ENCODE measurements at regions of chr4 and their contacts with region 1.

Region 1: GRCh38 chr4:186587416-186588018 is 32.1 kb upstream of the MTNR1A start:
- DNase-seq: peak; percentile 62
- H3K4me3 ChIP-seq: no peak overlapping the region; a peak in 1 of 4 replicates
- H3K27ac ChIP-seq: no peak overlapping the region
- H3K4me1 ChIP-seq: no peaks in the 10 kb centered on the region
- H3K27me3 ChIP-seq: no peaks in the 10 kb centered on the region; the same call in 1 of the 2 replicates
- CTCF ChIP-seq: peak; percentile 89
- EP300 ChIP-seq: no peak
- RAD21 ChIP-seq: peak; percentile 75

Region 2: DNA sequence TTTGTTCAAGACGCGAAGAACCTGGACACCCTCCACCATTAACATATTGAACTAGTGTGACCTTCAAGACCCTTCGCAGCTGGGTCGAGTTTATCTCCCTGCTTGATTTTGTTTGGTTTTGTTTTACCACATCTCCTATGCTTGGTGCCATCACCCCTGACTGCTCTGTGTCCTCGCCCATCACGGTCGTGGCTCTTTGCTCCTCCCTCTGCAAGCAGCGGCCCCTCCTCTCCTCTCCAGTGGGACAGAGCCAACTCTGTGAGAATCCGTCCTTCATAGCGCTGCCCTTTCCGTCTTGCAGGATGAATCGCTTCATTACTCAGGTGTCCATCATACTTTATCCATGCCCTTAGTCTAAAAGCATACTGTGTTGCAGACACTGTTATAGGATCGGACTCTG is 492.1 kb before region 1 on chr4:
- CTCF ChIA-PET with region 1: no interaction called
- POLR2A ChIA-PET with region 1: no interaction called
- DNase-seq: no peak
- H3K4me3 ChIP-seq: no peak overlapping the region
- H3K27ac ChIP-seq: no peak overlapping the region
- H3K4me1 ChIP-seq: no peaks in the 10 kb centered on the region; a peak in 1 of 4 replicates
- H3K27me3 ChIP-seq: no peaks in the 10 kb centered on the region
- CTCF ChIP-seq: no peak
- EP300 ChIP-seq: no peak
- RAD21 ChIP-seq: no peak

Region 3: GRCh38 chr4:186297013-186297645 is 290.4 kb before region 1 on chr4:
- CTCF ChIA-PET with region 1: interaction called, 97 read pairs
- POLR2A ChIA-PET with region 1: no interaction called
- DNase-seq: peak; percentile 73
- H3K4me3 ChIP-seq: no peak overlapping the region; a peak in 1 of 4 replicates
- H3K27ac ChIP-seq: no peak overlapping the region
- H3K4me1 ChIP-seq: no peaks in the 10 kb centered on the region
- H3K27me3 ChIP-seq: peaks cover 15% of the 10 kb centered on the region; the same call in 1 of the 2 replicates
- CTCF ChIP-seq: peak; percentile 75
- EP300 ChIP-seq: no peak
- RAD21 ChIP-seq: peak; percentile 86

Region 4: GRCh38 chr4:186307497-186307896 is 280.0 kb before region 1 on chr4:
- CTCF ChIA-PET with region 1: interaction called, 97 read pairs
- POLR2A ChIA-PET with region 1: no interaction called
- DNase-seq: no peak
- H3K4me3 ChIP-seq: no peak overlapping the region
- H3K27ac ChIP-seq: no peak overlapping the region
- H3K4me1 ChIP-seq: no peaks in the 10 kb centered on the region
- H3K27me3 ChIP-seq: no peaks in the 10 kb centered on the region; the same call in 1 of the 2 replicates
- CTCF ChIP-seq: no peak
- EP300 ChIP-seq: no peak
- RAD21 ChIP-seq: no peak

Region 5: GRCh38 chr4:186472948-186473347 is 114.6 kb before region 1 on chr4:
- CTCF ChIA-PET with region 1: interaction called, 12 read pairs
- POLR2A ChIA-PET with region 1: no interaction called
- DNase-seq: peak; percentile 30
- H3K4me3 ChIP-seq: peak overlapping the region in 1 of 2 experiments; percentile 21; a peak in 1 of 4 replicates
- H3K27ac ChIP-seq: no peak overlapping the region
- H3K4me1 ChIP-seq: no peaks in the 10 kb centered on the region; a peak in 1 of 4 replicates
- H3K27me3 ChIP-seq: peaks cover 7% of the 10 kb centered on the region; the same call in 1 of the 2 replicates
- CTCF ChIP-seq: peak; percentile 74
- EP300 ChIP-seq: no peak
- RAD21 ChIP-seq: peak; percentile 56

Measured in SK-N-SH (cell line).